AG04449 (cell line): ENCODE measurements at regions of chr21 and their contacts with region 1.

Region 1: DNA sequence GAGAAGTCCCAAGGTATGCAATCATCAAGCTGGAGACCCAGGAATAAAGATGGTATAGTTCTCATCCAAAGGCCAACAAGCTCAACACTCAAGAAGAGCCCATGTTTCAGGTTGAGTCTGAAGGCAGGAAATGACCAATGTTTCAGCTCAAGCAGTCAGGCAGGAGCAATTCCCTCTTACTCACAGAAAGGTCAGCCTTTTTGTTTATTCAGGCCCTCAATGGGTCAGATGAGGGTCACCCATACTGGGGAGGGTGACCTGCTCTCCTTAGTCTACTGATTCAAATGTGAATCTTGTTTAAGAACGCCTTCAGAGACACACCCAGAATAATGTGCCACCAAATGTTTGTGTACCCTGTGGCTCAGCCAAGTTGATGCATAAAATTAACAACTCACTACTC is 262.4 kb downstream of the USP25 start:
- DNase-seq: no peak
- H3K4me3 ChIP-seq: no peak overlapping the region
- CTCF ChIP-seq: no peak

Region 2: GRCh38 chr21:16002874-16003466 is 10.8 kb after region 1 on chr21:
- CTCF ChIA-PET with region 1: interaction called, 11 read pairs
- POLR2A ChIA-PET with region 1: no interaction called
- DNase-seq: no peak
- H3K4me3 ChIP-seq: no peak overlapping the region
- CTCF ChIP-seq: peak; percentile 36

Region 3: DNA sequence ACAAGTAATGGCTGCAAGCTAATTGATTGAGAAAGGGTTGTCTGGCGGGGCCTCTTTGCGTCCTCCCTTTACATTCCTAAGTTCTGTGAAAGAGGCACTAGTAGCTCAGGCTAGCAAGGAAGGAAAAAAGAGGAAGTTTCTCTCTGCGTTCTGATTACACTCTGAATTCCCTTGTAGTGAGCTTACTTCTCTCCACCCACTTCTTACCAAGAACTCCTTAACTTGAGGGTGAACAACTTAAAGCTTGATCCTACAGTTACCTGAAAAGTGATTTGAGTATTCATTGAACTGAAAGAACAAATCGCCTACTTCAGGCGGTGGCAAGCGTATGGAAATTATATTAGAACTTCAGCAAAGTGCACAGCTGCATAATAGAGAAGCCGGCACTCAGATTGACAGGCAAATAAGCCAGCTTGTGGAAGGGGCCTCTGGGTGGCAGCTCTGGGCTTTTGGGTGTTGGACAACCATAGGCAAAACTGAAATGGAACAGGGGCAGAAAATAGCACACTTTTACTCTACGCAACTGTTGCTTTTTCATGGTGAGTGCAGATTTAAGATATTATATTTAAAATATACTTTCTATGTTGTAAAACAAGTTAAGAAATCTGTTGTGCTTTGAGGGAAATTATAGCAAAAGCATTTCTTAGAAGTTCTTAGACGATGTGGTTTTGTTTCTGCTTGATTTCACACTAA is 202.1 kb after region 1 on chr21:
- CTCF ChIA-PET with region 1: no interaction called
- POLR2A ChIA-PET with region 1: no interaction called
- DNase-seq: peak; percentile 34
- H3K4me3 ChIP-seq: peak overlapping the region; percentile 48
- CTCF ChIP-seq: peak; percentile 19